ENCODE measurements at regions of chr13 and their contacts with region 1.

Region 1: GRCh38 chr13:20489185-20489820 is 36.4 kb downstream of the CRYL1 start:
- DNase-seq: peak in 1 of 2 donors; percentile 26
- ATAC-seq: no peak
- H3K4me3 ChIP-seq: no peak overlapping the region
- H3K27ac ChIP-seq: no peak overlapping the region
- H3K4me1 ChIP-seq: peaks cover 0 to 7% of the 10 kb centered on the region in 2 donors
- H3K27me3 ChIP-seq: no peaks in the 10 kb centered on the region
- CTCF ChIP-seq: peak in 2 of 5 experiments; percentile 27 to 31
- POLR2A ChIP-seq: no peak

Region 2: DNA sequence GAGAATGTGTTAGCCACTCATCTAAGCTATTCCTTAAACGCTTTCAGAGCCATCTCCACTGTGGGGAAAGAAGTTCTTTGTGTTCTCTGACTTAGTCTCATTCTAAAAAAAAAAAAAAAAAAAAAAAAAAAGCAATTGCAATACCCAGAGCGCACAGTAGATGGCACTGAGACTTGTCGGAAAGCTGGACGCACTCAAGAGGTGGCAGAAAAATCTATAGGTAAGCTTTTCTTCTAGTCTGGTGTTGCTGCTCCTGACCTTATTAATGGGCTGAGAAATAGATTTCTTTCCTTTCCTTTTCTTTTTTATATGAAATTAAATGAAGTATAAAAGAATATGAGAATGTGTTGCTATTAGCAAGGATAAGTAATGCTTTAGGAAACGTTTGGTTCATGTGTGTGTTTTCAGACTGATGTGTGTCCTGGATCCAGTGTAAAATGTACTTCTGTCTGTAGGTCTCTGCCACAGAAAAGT is 291.9 kb before region 1 on chr13:
- in situ Hi-C with region 1: loop called in 3 of 4 experiments (anchors 10 to 25 kb)
- intact Hi-C with region 1: loop called (anchors 1 kb)
- DNase-seq: no peak
- ATAC-seq: peak in 1 of 2 donors; percentile 49
- H3K4me3 ChIP-seq: no peak overlapping the region
- H3K27ac ChIP-seq: no peak overlapping the region
- H3K4me1 ChIP-seq: peaks cover 14 to 15% of the 10 kb centered on the region in 2 donors
- H3K27me3 ChIP-seq: peaks cover 44 to 49% (median 47%) of the 10 kb centered on the region in 3 donors
- CTCF ChIP-seq: peak; percentile 19 to 73 (median 35)
- POLR2A ChIP-seq: no peak

Region 3: GRCh38 chr13:20534038-20534608 is 44.8 kb after region 1 on chr13:
- in situ Hi-C with region 1: no loop called
- intact Hi-C with region 1: no loop called
- DNase-seq: no peak
- ATAC-seq: no peak
- H3K4me3 ChIP-seq: no peak overlapping the region
- H3K27ac ChIP-seq: no peak overlapping the region
- H3K4me1 ChIP-seq: no peaks in the 10 kb centered on the region
- H3K27me3 ChIP-seq: peaks cover 0 to 3% (median 0%) of the 10 kb centered on the region in 3 donors
- CTCF ChIP-seq: no peak
- POLR2A ChIP-seq: no peak

Measured in gastrocnemius medialis (tissue), 4 donors.